H1 (cell line): ENCODE measurements at regions of chr10 and their contacts with region 1.

Region 1: DNA sequence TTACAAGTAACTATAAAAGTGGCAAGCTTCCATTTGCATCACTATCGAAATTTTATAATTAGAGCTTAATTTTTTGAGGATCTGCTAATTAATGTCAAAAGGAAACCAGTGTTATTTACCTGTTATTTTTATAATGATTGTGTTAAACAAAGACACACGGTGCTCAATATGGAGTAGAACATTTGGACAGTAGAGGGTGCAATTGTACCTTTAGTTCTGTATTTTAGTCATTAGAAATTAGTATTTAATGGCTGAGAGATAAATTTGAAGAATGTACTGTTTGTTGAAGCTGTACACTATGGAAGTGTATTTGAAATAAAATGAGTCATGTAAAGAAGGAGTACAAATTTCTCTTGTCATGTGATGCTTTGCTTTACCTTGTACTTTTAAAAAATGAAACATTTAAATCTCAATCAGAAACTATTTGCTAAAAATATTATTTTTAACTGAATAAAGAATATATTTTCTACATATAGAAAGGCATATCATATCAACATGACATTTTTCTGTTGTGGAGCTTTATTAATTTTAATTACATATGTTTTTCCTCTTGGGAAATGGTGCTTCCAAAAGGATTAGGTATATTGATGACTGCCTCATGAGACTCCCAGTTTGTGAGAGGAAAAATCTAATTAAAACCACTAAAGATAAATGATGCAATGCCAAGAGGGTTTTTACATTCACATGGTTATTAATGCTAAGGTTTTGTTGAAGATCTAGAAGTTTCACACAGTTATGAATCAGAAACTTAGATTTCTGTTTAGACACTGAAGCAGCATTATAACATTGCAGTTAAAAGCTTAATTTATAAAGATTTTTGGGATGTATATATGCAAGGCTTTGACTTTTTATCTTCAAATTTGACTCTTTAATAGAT is 10.4 kb upstream of the PRKG1 start:
- DNase-seq: no peak
- H3K4me3 ChIP-seq: no peak overlapping the region
- H3K27ac ChIP-seq: no peak overlapping the region
- H3K4me1 ChIP-seq: no peaks in the 10 kb centered on the region
- H3K27me3 ChIP-seq: no peaks in the 10 kb centered on the region
- CTCF ChIP-seq: peak in 2 of 3 experiments; percentile 23 to 45; a peak in 2 of 4 replicates
- EP300 ChIP-seq: no peak
- POLR2A ChIP-seq: no peak
- RAD21 ChIP-seq: peak; percentile 64 to 81

Region 2: DNA sequence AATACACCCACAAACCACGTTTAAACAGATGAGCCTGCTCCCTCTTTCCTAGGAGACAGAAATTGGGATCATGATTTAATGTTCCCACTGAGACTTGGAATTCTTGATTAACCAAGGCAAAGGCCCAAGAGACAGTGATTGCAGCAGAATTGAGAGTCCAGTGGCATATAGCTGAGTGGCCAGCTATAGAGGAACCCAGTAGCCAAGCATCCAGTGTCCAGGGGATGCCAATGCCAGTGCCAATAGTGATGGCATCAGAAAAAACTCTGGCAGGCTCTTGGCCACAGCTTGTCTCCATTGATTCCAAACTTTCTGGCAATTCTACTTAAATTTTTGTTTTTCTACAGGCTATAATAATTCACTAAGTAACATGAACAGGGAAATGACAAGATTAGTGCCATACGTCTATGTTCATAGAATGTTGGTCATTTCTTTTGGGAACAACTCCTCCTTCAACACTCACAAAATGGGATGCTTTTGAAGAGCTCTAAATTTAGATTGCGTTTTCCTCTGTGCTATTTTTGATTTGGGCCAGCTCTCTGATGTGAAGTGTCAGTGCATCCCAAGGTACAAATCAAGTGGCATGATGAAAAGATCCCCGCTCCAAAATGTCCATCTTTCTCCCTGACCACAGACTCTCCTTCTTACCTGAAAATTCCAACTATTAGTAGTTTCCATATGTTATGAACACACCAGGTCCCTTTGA is 95.4 kb before region 1 on chr10:
- CTCF ChIA-PET with region 1: no interaction called
- POLR2A ChIA-PET with region 1: no interaction called
- DNase-seq: no peak
- H3K4me3 ChIP-seq: no peak overlapping the region
- H3K27ac ChIP-seq: no peak overlapping the region
- H3K4me1 ChIP-seq: no peaks in the 10 kb centered on the region
- H3K27me3 ChIP-seq: no peaks in the 10 kb centered on the region
- CTCF ChIP-seq: no peak
- EP300 ChIP-seq: no peak
- POLR2A ChIP-seq: no peak
- RAD21 ChIP-seq: no peak

Region 3: GRCh38 chr10:51010977-51011376 is 52.9 kb before region 1 on chr10:
- CTCF ChIA-PET with region 1: no interaction called
- POLR2A ChIA-PET with region 1: no interaction called
- DNase-seq: no peak
- H3K4me3 ChIP-seq: no peak overlapping the region
- H3K27ac ChIP-seq: no peak overlapping the region
- H3K4me1 ChIP-seq: peaks cover 0 to under 1% (median under 1%) of the 10 kb centered on the region in 4 experiments; a peak in 1 of 7 replicates
- H3K27me3 ChIP-seq: no peaks in the 10 kb centered on the region
- CTCF ChIP-seq: peak in 2 of 3 experiments; percentile 64 to 68; a peak in 3 of 4 replicates
- EP300 ChIP-seq: no peak
- POLR2A ChIP-seq: no peak
- RAD21 ChIP-seq: peak; percentile 72 to 80

Region 4: DNA sequence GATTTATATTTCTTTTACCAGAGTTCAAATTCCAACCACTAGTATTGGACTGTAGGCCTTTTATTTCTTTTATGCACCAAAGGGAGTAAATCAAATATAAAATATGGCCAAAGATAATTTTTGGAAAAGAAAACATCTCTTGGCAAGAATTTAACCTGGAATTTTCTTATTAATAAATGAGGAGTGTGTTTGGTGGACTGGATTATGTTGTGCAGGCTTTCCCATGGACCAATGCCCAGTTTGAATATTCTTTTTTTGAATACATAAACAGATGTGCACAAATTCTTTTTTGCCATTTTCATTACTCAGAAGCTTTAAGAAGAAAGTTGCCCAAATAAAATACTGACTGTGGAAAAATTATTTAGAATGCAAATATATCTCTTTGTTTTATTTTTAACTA is 11.7 kb before region 1 on chr10:
- CTCF ChIA-PET with region 1: interaction called, 10 read pairs
- POLR2A ChIA-PET with region 1: no interaction called
- DNase-seq: no peak
- H3K4me3 ChIP-seq: no peak overlapping the region
- H3K27ac ChIP-seq: no peak overlapping the region
- H3K4me1 ChIP-seq: no peaks in the 10 kb centered on the region
- H3K27me3 ChIP-seq: no peaks in the 10 kb centered on the region
- CTCF ChIP-seq: no peak
- EP300 ChIP-seq: no peak
- POLR2A ChIP-seq: no peak
- RAD21 ChIP-seq: no peak

Region 5: GRCh38 chr10:51074238-51075028 is 10.5 kb after region 1 on chr10 and contains the start of gene PRKG1:
- CTCF ChIA-PET with region 1: interaction called, 24 read pairs
- POLR2A ChIA-PET with region 1: interaction called, 4 read pairs
- DNase-seq: peak in 1 of 2 experiments; percentile 85
- H3K4me3 ChIP-seq: peak within 1 kb of the TSS; percentile 78 to 97 (median 90)
- H3K27ac ChIP-seq: peak within 1 kb of the TSS; percentile 66; the same call in 1 of the 2 replicates
- H3K4me1 ChIP-seq: peaks cover 0 to 16% (median 8%) of the 10 kb centered on the region in 4 experiments; a peak in 4 of 7 replicates
- H3K27me3 ChIP-seq: 0 out of 7 replicates have a peak, but pooled peaks cover 0 to 2% (median 0%) of the 10 kb centered on the region in 4 experiments
- CTCF ChIP-seq: no peak
- EP300 ChIP-seq: no peak
- POLR2A ChIP-seq: peak in 1 of 2 experiments; percentile 75; a peak in 2 of 3 replicates
- RAD21 ChIP-seq: no peak; a peak in 2 of 4 replicates
- total RNA-seq, gene PRKG1: 15.2 and 16.0 TPM in 2 replicates

Region 6: GRCh38 chr10:51083356-51083853 is 19.5 kb after region 1 on chr10:
- CTCF ChIA-PET with region 1: interaction called, 30 read pairs
- POLR2A ChIA-PET with region 1: no interaction called
- DNase-seq: peak in 1 of 2 experiments; percentile 53
- H3K4me3 ChIP-seq: peak overlapping the region in 1 of 4 experiments; percentile 22; a peak in 2 of 8 replicates
- H3K27ac ChIP-seq: peak overlapping the region; percentile 51; the same call in 1 of the 2 replicates
- H3K4me1 ChIP-seq: peaks cover 9 to 21% (median 15%) of the 10 kb centered on the region in 4 experiments; a peak in 6 of 7 replicates
- H3K27me3 ChIP-seq: no peaks in the 10 kb centered on the region
- CTCF ChIP-seq: peak; percentile 36 to 58 (median 42)
- EP300 ChIP-seq: no peak
- POLR2A ChIP-seq: peak in 1 of 2 experiments; percentile 37; a peak in 1 of 3 replicates
- RAD21 ChIP-seq: peak; percentile 6 to 44; a peak in 2 of 4 replicates

Region 7: GRCh38 chr10:51389415-51390321 is 325.8 kb after region 1 on chr10:
- CTCF ChIA-PET with region 1: interaction called, 14 read pairs
- POLR2A ChIA-PET with region 1: no interaction called
- DNase-seq: peak; percentile 33 to 75
- H3K4me3 ChIP-seq: no peak overlapping the region
- H3K27ac ChIP-seq: no peak overlapping the region
- H3K4me1 ChIP-seq: no peaks in the 10 kb centered on the region
- H3K27me3 ChIP-seq: no peaks in the 10 kb centered on the region
- CTCF ChIP-seq: peak; percentile 85 to 91 (median 90)
- EP300 ChIP-seq: no peak
- POLR2A ChIP-seq: no peak
- RAD21 ChIP-seq: peak; percentile 92 to 94

Region 8: GRCh38 chr10:51422311-51423120 is 358.6 kb after region 1 on chr10:
- CTCF ChIA-PET with region 1: interaction called, 24 read pairs
- POLR2A ChIA-PET with region 1: no interaction called
- DNase-seq: peak; percentile 7 to 67
- H3K4me3 ChIP-seq: no peak overlapping the region
- H3K27ac ChIP-seq: no peak overlapping the region
- H3K4me1 ChIP-seq: peaks cover 0 to 3% (median 1%) of the 10 kb centered on the region in 4 experiments; a peak in 3 of 7 replicates
- H3K27me3 ChIP-seq: no peaks in the 10 kb centered on the region
- CTCF ChIP-seq: peak; percentile 65 to 73 (median 73)
- EP300 ChIP-seq: no peak
- POLR2A ChIP-seq: no peak
- RAD21 ChIP-seq: peak; percentile 79 to 82